Activated B cell treated with CpG ODN at 0.5 μM for 24 hours (primary cell): ENCODE measurements at regions of chr5 and their contacts with region 1.

Region 1: GRCh38 chr5:58871648-58872242 is 288.9 kb downstream of the RAB3C start:
- DNase-seq: no peak
- ATAC-seq: no peak
- H3K4me3 Mint-ChIP-seq: no peak overlapping the region
- H3K27ac Mint-ChIP-seq: no peak overlapping the region
- H3K4me1 Mint-ChIP-seq: no peaks in the 10 kb centered on the region
- H3K27me3 Mint-ChIP-seq: peaks cover 10% of the 10 kb centered on the region
- CTCF ChIP-seq: peak; percentile 93

Region 2: DNA sequence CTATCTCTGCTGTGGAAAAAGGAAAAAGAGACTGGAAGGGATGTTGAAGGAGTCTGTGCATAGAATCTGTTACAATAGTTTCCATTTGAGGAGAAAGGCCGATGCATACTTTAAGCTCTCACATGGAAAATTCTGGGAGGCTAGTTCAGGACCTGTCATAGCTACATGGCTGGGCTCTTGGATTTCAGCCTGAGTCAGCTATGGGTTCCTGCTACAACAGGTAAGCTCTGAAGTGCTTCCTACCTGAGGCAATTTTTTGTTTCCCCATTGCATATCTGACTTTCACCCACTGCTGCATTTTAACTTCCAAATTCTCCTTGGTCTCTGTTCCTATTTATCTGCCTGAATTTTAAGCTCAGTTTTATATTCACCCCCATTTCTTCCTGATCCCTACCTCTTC is 21.8 kb after region 1 on chr5:
- CTCF ChIA-PET with region 1: interaction called, 10 read pairs
- POLR2A ChIA-PET with region 1: no interaction called
- intact Hi-C with region 1: no loop called
- DNase-seq: no peak
- ATAC-seq: no peak
- H3K4me3 Mint-ChIP-seq: no peak overlapping the region
- H3K27ac Mint-ChIP-seq: no peak overlapping the region
- H3K4me1 Mint-ChIP-seq: peaks cover 4% of the 10 kb centered on the region
- H3K27me3 Mint-ChIP-seq: peaks cover 3% of the 10 kb centered on the region
- CTCF ChIP-seq: no peak

Region 3: GRCh38 chr5:59007460-59008063 is 135.8 kb after region 1 on chr5:
- CTCF ChIA-PET with region 1: no interaction called
- POLR2A ChIA-PET with region 1: no interaction called
- intact Hi-C with region 1: loop called (anchors 1 kb)
- DNase-seq: no peak
- ATAC-seq: no peak
- H3K4me3 Mint-ChIP-seq: no peak overlapping the region
- H3K27ac Mint-ChIP-seq: no peak overlapping the region
- H3K4me1 Mint-ChIP-seq: no peaks in the 10 kb centered on the region
- H3K27me3 Mint-ChIP-seq: no peaks in the 10 kb centered on the region
- CTCF ChIP-seq: no peak

Region 4: DNA sequence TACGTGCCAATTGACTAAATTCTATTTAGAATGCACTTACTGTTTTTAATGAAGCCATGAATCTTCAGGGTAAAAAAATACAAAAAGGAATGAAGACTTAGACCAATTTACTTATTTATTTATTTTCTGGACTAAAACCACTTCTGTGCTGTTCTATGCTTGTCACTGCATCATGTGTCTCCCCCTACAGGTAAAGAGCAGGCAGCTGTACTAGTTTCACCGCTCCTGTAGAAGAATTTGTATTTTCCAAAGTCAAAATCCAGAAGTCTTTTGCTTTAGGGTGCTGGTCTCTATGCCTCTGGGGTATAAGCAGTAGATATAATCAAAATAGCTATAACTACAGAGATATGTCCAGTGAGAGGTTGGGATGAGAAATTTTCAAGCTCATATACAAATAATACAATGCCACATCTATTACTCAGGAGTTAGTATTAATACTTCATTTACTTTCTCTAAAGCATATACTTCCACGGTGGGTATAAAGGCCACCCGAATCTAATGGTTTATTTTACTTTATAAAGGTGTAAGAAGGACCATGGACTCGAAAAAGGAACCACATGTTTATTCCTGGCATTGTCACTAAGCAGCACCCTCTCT is 302.6 kb after region 1 on chr5:
- CTCF ChIA-PET with region 1: no interaction called
- POLR2A ChIA-PET with region 1: no interaction called
- intact Hi-C with region 1: loop called (anchors 1 kb)
- DNase-seq: no peak
- ATAC-seq: peak; percentile 50
- H3K4me3 Mint-ChIP-seq: no peak overlapping the region
- H3K27ac Mint-ChIP-seq: no peak overlapping the region
- H3K4me1 Mint-ChIP-seq: peaks cover 6% of the 10 kb centered on the region
- H3K27me3 Mint-ChIP-seq: no peaks in the 10 kb centered on the region
- CTCF ChIP-seq: no peak